Ovary (tissue), 10 donors: ENCODE measurements at regions of chr4 and their contacts with region 1.

Region 1: GRCh38 chr4:140153718-140154571 is at the start of gene MAML3:
- DNase-seq: peak; percentile 94 to 96 (median 96)
- H3K4me3 ChIP-seq: peak within 1 kb of the TSS; percentile 50
- H3K27ac ChIP-seq: peak within 1 kb of the TSS; percentile 96 to 99
- H3K4me1 ChIP-seq: peaks cover 10% of the 10 kb centered on the region
- H3K27me3 ChIP-seq: no peaks in the 10 kb centered on the region
- CTCF ChIP-seq: peak in 2 of 3 donors; percentile 11 to 51
- EP300 ChIP-seq: no peak
- POLR2A ChIP-seq: peak; percentile 78
- total RNA-seq, gene MAML3: 14.2 to 23.8 (median 17.0) TPM

Region 2: GRCh38 chr4:139651282-139652194 is 502.4 kb before region 1 on chr4:
- intact Hi-C with region 1: loop called in 1 of 4 experiments (anchors 10 kb)
- DNase-seq: peak; percentile 92 to 94 (median 94)
- H3K4me3 ChIP-seq: no peak overlapping the region
- H3K27ac ChIP-seq: no peak overlapping the region
- H3K4me1 ChIP-seq: peaks cover 3% of the 10 kb centered on the region
- H3K27me3 ChIP-seq: no peaks in the 10 kb centered on the region
- CTCF ChIP-seq: peak; percentile 71 to 89 (median 84)
- EP300 ChIP-seq: no peak
- POLR2A ChIP-seq: no peak

Region 3: DNA sequence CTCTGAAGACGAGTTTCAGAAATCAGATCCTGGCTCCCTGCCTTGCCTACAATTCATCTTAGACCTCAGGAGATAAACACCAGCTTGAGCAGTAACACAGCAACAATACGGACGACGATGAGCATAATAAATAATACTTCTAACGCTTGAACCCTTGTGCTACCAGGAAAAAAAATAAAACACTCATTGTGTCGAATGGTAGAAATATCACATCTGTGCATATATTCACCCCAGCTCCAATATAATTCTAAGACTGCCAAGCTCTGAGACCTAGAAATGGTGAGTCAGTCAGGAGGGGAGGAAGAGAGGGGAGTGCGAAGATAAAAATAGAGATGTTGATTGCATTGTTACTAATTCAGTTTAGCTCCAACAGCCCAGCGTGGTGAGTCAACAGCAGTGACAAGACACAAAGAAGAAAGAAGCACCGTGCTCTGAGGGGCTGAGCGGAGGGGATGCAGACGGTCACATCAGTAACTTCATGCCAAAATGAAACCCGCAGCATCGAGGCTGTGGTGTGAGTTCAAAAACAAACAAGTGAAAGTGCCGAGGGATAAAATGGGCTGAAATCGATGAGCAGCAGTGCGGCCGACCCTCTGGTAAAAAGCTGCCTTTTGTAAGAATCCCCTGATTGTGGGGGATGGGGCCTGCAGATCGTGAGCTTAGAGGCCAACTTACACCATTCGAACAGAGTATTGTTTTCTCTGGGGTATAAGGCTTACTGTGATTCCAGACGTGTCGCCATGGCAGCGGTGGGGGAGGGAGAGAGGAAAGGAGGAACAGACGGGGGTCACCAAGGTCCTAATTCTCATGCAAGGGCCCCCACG is 338.0 kb before region 1 on chr4:
- intact Hi-C with region 1: loop called in 1 of 4 experiments (anchors 10 kb)
- DNase-seq: peak; percentile 64 to 80 (median 72)
- H3K4me3 ChIP-seq: peak overlapping the region; percentile 27
- H3K27ac ChIP-seq: peak overlapping the region; percentile 48 to 83
- H3K4me1 ChIP-seq: peaks cover 12% of the 10 kb centered on the region
- H3K27me3 ChIP-seq: no peaks in the 10 kb centered on the region
- CTCF ChIP-seq: no peak
- EP300 ChIP-seq: no peak
- POLR2A ChIP-seq: peak; percentile 35

Region 4: GRCh38 chr4:139913398-139913990 is 240.5 kb before region 1 on chr4:
- intact Hi-C with region 1: loop called in 3 of 4 experiments (anchors 5 to 10 kb)
- DNase-seq: peak; percentile 46 to 70 (median 51)
- H3K4me3 ChIP-seq: no peak overlapping the region
- H3K27ac ChIP-seq: peak overlapping the region in 1 of 2 donors; percentile 75
- H3K4me1 ChIP-seq: peaks cover 27% of the 10 kb centered on the region
- H3K27me3 ChIP-seq: no peaks in the 10 kb centered on the region
- CTCF ChIP-seq: no peak
- EP300 ChIP-seq: no peak
- POLR2A ChIP-seq: no peak

Region 5: GRCh38 chr4:139978692-139979091 is 175.3 kb before region 1 on chr4:
- intact Hi-C with region 1: loop called in 1 of 4 experiments (anchors 10 kb)
- DNase-seq: no peak
- H3K4me3 ChIP-seq: no peak overlapping the region
- H3K27ac ChIP-seq: no peak overlapping the region
- H3K4me1 ChIP-seq: peaks cover 17% of the 10 kb centered on the region
- H3K27me3 ChIP-seq: no peaks in the 10 kb centered on the region
- CTCF ChIP-seq: no peak
- EP300 ChIP-seq: no peak
- POLR2A ChIP-seq: no peak

Region 6: DNA sequence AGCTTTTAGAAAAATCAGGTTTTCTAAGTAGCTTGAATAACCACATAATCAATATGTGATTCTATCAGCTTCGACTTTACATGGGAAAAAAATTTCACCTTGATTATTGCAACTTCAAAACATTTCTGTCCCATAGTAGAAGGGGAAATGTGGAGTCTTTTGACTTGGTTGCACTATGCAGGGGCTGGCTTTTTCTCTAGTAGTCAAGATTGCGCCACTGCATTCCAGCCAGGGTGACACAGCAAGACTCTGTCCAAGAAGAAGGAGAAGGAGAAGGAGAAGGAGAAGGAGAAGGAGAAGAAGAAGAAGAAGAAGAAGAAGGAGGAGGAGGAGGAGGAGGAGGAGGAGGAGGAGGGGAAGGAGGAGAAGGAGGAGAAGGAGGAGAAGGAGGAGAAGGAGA is 84.9 kb before region 1 on chr4:
- intact Hi-C with region 1: loop called in 1 of 4 experiments (anchors 10 kb)
- DNase-seq: peak in 1 of 5 donors; percentile 60
- H3K4me3 ChIP-seq: no peak overlapping the region
- H3K27ac ChIP-seq: no peak overlapping the region
- H3K4me1 ChIP-seq: peaks cover 16% of the 10 kb centered on the region
- H3K27me3 ChIP-seq: no peaks in the 10 kb centered on the region
- CTCF ChIP-seq: no peak
- EP300 ChIP-seq: no peak
- POLR2A ChIP-seq: no peak

Region 7: GRCh38 chr4:140252742-140253555 is 99.0 kb after region 1 on chr4:
- intact Hi-C with region 1: loop called (anchors 2 to 5 kb)
- DNase-seq: peak; percentile 78 to 89 (median 85)
- H3K4me3 ChIP-seq: peak overlapping the region; percentile 60
- H3K27ac ChIP-seq: peak overlapping the region; percentile 94 to 95
- H3K4me1 ChIP-seq: peaks cover 5% of the 10 kb centered on the region
- H3K27me3 ChIP-seq: no peaks in the 10 kb centered on the region
- CTCF ChIP-seq: peak; percentile 78 to 85 (median 84)
- EP300 ChIP-seq: no peak
- POLR2A ChIP-seq: no peak